GM12878 (cell line): ENCODE measurements at regions of chr1 and their contacts with region 1.

Region 1: DNA sequence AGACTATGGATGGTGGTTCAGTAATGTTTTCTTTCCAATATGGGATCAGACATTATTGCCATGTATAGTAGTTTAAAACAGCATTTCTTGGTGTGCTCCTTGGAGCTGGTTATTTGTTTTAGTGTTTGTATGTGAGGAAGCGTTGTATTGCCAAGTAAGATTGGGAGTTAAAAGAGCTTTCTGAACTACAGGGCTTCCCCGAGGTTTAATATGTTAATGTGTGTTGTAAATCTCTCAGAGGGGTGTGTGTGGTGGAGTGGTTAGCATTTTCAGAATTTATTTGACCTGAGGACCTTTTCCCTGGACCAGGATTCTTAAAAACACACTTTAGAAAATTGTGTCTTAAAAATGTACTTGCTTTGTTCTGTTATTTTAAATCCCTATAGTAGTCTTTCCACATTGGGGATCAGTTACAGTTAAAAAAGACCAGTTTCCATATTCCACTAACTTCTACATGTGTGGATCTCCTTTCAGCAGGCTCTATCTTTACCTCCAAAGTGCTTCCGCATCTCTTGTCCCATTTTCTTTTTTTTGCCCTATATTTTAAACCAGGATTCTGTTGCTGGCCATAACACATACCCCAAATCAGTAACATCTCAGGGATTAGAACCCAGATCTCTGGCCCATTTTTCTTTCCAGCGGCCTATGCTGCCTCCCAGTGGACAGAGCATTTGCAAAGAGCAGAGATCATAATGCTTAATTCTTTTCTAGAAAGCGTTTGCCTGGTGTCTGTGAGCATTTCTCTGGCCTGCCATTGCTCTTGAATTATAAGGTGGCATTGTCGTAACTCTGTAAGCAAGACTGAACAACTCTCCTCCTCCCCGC is 58.6 kb downstream of the PBX1 start:
- DNase-seq: no peak
- ATAC-seq: peak; percentile 54
- H3K4me3 ChIP-seq: no peak overlapping the region
- H3K27ac ChIP-seq: no peak overlapping the region
- H3K4me1 ChIP-seq: no peaks in the 10 kb centered on the region
- H3K27me3 ChIP-seq: no peaks in the 10 kb centered on the region
- CTCF ChIP-seq: peak in 2 of 3 experiments; percentile 34 to 35; a peak in 3 of 6 replicates
- EP300 ChIP-seq: no peak
- POLR2A ChIP-seq: no peak
- RAD21 ChIP-seq: peak; percentile 63

Region 2: GRCh38 chr1:163410073-163410999 is 1207.3 kb before region 1 on chr1:
- CTCF ChIA-PET with region 1: no interaction called
- POLR2A ChIA-PET with region 1: no interaction called
- RAD21 ChIA-PET with region 1: no interaction called
- SMC1A ChIA-PET with region 1: interaction called, 3 read pairs
- in situ Hi-C with region 1: loop called (anchors 10 kb)
- intact Hi-C with region 1: loop called (anchors 5 kb)
- DNase-seq: no peak
- ATAC-seq: peak; percentile 55
- H3K4me3 ChIP-seq: no peak overlapping the region
- H3K27ac ChIP-seq: no peak overlapping the region
- H3K4me1 ChIP-seq: peaks cover 9% of the 10 kb centered on the region
- H3K27me3 ChIP-seq: no peaks in the 10 kb centered on the region
- CTCF ChIP-seq: peak; percentile 73 to 84 (median 82)
- EP300 ChIP-seq: no peak
- POLR2A ChIP-seq: no peak
- RAD21 ChIP-seq: peak; percentile 91

Region 3: DNA sequence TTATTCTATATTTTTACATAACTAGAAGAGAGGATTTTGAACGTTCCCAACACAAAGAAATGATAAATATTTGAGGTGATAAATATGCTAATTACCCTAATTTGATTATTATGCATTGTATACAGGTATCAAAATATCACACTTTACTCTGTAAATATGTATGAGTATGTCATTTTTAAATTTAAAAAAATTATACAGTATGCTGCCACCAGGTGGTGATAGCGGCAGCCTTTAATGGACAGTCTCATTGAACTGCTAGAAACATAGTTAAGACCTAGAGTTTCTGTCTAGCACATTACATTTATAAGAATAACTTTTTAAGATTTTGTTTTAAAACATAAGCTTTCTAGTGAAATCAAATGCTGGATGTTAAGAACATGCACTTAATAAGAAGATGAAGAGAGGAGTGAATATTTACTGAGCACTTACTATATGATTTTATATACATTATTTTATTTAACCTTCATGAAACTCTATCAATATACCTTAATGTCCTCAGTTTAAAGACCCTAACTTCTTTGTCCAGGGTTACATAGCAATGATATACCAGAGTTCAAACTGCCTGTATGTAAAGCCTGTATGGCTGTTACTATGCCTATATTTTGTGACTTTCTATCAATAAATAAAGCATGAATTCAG is 1088.8 kb before region 1 on chr1:
- CTCF ChIA-PET with region 1: no interaction called
- POLR2A ChIA-PET with region 1: no interaction called
- RAD21 ChIA-PET with region 1: interaction called, 3 read pairs
- SMC1A ChIA-PET with region 1: no interaction called
- in situ Hi-C with region 1: loop called (anchors 10 kb)
- intact Hi-C with region 1: loop called (anchors 5 kb)
- DNase-seq: no peak
- ATAC-seq: peak; percentile 77
- H3K4me3 ChIP-seq: no peak overlapping the region
- H3K27ac ChIP-seq: no peak overlapping the region
- H3K4me1 ChIP-seq: no peaks in the 10 kb centered on the region
- H3K27me3 ChIP-seq: no peaks in the 10 kb centered on the region
- CTCF ChIP-seq: peak; percentile 44 to 52 (median 48)
- EP300 ChIP-seq: no peak
- POLR2A ChIP-seq: no peak
- RAD21 ChIP-seq: peak; percentile 63

Region 4: DNA sequence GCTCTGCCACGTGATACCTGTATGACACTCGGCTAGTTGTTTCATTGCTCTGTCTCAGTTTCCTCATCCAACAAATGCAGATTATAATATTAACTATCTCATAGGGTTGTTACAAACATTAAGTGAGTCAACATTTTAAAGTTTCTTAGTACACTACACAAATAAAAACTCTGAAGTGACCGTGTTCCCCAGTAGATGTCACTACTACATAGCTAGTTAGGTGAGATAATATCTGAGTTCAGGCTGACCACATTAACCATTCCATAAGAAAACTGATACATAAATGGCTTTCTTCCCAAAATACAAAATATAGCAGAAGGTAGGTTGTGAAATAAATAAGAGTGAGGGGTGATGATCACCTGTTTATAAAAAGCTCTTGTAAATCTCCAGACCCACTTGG is 1081.8 kb before region 1 on chr1:
- CTCF ChIA-PET with region 1: no interaction called
- POLR2A ChIA-PET with region 1: no interaction called
- RAD21 ChIA-PET with region 1: interaction called, 3 read pairs
- SMC1A ChIA-PET with region 1: no interaction called
- in situ Hi-C with region 1: loop called (anchors 10 kb)
- intact Hi-C with region 1: no loop called
- DNase-seq: no peak
- ATAC-seq: 0 out of 3 replicates have a peak, but pooled peaks have one; percentile 39
- H3K4me3 ChIP-seq: no peak overlapping the region
- H3K27ac ChIP-seq: no peak overlapping the region
- H3K4me1 ChIP-seq: no peaks in the 10 kb centered on the region
- H3K27me3 ChIP-seq: no peaks in the 10 kb centered on the region
- CTCF ChIP-seq: peak in 1 of 3 experiments; percentile 12; a peak in 2 of 6 replicates
- EP300 ChIP-seq: no peak
- POLR2A ChIP-seq: no peak
- RAD21 ChIP-seq: peak; percentile 47

Region 5: DNA sequence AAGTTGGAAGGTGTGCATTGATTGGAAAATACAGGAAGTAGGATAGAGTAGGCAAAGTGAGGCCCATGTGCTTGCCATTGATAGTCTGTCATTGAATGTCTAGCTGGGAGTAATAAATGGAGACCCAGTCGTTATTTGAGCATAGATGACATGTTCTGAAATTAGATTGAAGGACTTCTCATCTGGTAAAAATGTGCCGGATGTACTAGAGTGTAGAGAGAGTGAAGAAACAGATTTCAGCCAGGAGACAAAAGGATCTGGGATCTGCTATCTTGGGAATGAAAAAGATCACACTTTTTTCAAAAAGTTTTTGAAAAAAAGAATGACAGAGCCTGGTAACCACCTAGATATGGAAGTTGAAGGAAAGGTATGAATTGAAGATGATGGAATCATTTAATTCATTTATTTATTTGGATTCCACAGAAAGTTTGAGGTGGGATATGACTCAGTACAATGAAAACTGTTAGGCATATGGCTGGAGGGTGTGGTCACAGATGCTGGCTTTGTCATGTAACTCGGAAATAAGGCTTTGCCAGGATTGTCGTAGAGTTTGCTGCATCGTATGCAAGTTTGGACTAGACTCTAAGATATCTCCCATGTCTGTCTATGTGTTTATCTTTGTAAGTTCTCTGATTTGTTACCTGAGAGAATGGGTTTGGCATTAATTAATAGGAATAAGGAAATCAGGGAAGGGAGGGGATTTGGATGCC is 78.5 kb after region 1 on chr1:
- CTCF ChIA-PET with region 1: no interaction called
- POLR2A ChIA-PET with region 1: no interaction called
- RAD21 ChIA-PET with region 1: no interaction called
- SMC1A ChIA-PET with region 1: no interaction called
- in situ Hi-C with region 1: no loop called
- intact Hi-C with region 1: no loop called
- DNase-seq: no peak
- ATAC-seq: no peak
- H3K4me3 ChIP-seq: no peak overlapping the region
- H3K27ac ChIP-seq: no peak overlapping the region
- H3K4me1 ChIP-seq: no peaks in the 10 kb centered on the region
- H3K27me3 ChIP-seq: no peaks in the 10 kb centered on the region
- CTCF ChIP-seq: no peak
- EP300 ChIP-seq: no peak
- POLR2A ChIP-seq: no peak
- RAD21 ChIP-seq: no peak